ENCODE measurements at regions of chr13 and their contacts with region 1.

Region 1: DNA sequence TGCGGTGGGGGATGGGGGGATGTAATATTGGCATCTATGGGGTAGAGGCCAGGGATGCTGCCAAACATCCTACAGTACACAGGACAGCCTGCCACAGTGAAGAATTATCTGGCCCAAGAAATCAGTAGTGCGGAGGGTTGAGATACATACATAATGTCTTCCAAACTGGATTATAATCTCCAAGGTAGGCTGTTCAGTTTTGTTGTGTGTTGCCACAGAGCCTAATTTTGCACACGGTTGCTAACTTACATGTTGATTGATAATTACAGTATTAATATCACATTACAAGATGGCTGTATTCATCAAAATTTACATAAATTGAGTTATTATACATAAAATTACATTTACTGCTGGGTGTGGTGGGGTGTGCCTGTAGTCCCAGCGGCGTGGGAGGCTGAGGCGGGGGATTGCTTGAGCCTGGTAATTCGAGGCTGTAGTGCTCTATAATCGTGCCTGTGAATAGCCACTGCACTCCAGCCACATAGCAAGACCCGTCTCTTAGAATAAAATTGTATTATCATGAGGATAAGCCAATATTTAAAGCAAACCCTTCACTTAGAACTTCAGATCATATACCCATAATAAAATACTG is 8.1 kb downstream of the POMP start:
- DNase-seq: no peak

Region 2: GRCh38 chr13:28429685-28430290 is 237.2 kb before region 1 on chr13:
- intact Hi-C with region 1: no loop called
- DNase-seq: no peak

Region 3: GRCh38 chr13:28447989-28448388 is 219.0 kb before region 1 on chr13:
- intact Hi-C with region 1: no loop called
- DNase-seq: no peak

Region 4: GRCh38 chr13:28459911-28460310 is 207.1 kb before region 1 on chr13:
- intact Hi-C with region 1: no loop called
- DNase-seq: no peak

Region 5: DNA sequence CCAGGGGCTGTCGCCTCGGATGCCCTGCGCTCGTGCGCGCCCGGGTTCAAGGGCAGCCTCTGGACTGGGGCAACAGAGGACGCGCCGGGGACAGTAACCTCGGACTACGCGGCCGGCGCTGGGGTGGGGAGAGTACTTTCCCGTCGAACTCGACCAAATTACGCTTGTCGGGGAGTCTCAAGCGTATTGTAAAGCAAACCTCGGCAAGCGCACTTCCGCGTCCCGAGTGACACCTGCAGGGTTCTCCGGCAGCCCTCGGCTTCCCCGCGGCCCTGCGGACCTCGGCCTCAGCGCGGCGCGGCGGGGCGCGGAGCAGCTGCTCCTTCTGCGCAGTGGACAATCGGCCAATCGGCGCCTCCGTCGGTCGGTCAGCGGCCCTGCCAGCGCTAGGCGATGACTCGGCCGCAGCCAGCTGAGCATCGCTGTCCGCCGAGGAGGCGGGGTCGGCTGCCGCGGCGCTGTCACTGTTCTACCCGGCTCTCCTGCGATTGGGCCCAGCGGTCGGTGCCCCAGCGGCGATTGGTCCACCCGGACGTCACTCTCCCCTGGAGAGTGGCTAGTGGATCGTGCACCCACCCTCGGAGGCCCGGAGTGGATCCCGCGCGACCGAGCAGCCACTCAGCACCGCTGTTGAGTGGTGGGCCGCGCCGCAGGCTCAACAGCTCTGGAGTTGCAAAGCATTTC is 51.7 kb after region 1 on chr13 and contains the start of gene SLC46A3:
- intact Hi-C with region 1: loop called (anchors 10 kb)
- DNase-seq: peak; percentile 97 to 100 (median 99)